MCF 10A (cell line): ENCODE measurements at regions of chr1 and their contacts with region 1.

Region 1: DNA sequence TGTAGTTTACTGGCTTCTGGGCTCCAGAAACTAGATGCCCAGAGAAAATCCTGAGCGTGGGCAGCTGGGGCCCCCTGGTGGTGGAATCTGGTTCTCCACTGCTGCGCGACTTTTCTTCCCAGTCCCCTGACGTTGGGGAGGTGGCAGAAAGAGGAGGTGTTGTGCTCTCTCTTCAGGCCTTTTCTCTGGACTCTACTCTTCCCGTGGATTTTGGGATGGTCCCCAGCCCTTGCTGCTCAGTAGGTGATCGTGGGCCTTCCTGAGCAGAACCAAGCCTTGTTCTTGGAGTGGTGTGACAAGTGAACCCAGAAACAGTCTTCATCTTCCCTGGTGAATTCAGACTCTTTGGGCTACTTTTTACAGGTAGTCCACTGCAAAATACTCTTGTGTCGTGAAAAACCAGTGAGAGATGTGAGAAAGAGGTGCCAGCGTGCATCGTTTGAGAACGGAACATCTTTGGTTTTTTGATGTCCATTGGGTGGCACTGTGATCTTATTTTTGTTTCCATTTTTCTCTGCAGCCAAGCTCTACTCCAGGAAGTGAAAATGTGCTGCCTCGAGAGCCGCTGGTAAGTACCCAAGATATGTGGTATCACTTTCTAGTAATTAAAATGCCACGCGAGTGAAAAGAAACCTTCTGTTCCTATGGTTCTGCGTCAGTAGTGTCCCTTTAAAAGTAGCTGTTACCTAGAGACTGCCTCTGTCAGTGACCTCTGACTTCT is 20.2 kb downstream of the PEX14 start:
- DNase-seq: peak; percentile 76
- H3K4me3 Mint-ChIP-seq: peak overlapping the region; percentile 58
- H3K27ac Mint-ChIP-seq: peak overlapping the region; percentile 80
- H3K4me1 Mint-ChIP-seq: peaks cover 26% of the 10 kb centered on the region
- H3K27me3 Mint-ChIP-seq: no peaks in the 10 kb centered on the region
- CTCF ChIP-seq: peak; percentile 83

Region 2: DNA sequence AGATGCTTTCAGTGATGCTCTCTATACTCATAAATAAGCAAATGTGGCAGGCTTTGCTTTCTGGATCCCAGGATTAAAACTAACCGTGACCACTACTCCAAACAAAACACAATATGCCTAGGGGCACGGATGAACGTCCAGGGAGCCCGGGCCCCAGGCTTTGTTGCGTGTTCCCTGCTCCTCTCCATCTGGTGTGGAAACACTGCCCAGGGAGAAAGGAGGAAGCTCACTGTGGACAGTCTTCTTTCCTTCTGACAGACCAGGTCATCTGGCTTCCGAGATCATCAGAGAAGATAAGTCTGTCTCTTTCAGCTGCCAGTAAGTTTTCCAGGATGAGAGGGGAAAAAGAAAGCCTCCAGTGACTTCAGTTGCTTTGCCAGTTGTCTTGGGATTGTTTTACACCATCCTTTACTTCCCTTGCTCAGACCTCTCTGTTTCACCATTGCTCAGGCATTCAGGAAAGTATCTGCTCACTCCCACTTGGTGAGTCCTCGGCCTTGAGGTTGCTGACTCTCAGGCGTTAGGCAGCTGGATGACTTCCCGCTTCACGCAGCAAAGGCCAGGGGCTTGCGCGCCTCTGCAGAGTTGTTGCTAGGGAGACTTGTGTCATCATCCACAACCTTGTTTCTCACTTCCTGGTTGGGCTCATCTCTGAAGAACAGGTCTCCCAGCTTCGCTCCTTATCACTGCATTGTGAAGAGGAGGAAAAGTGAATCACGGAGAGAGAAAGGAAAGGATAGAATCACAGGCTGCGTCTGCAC is 116.7 kb before region 1 on chr1:
- CTCF ChIA-PET with region 1: interaction called, 6 read pairs
- POLR2A ChIA-PET with region 1: no interaction called
- intact Hi-C with region 1: loop called (anchors 2 kb)
- DNase-seq: no peak
- H3K4me3 Mint-ChIP-seq: no peak overlapping the region
- H3K27ac Mint-ChIP-seq: no peak overlapping the region
- H3K4me1 Mint-ChIP-seq: peaks cover 5% of the 10 kb centered on the region
- H3K27me3 Mint-ChIP-seq: no peaks in the 10 kb centered on the region
- CTCF ChIP-seq: no peak

Region 3: DNA sequence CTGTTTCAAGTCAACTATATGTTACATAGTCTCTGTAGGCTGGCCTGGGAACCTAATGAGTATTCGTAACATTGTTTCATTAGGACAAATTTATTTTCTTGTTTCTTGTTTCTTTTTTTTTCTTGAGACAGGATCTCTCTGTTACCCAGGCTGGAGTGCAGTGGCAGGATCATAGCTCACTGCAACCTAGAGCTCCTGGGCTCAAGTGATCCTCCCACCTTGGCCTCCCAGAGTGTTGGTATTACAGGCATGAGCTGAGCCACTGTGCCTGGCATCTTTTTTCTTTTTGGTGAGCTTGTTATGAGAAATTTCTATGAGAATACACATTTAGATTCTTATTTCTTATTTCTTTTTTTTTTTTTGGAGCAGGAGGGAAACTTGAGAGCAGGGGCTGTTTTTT is 57.9 kb before region 1 on chr1:
- CTCF ChIA-PET with region 1: interaction called, 119 read pairs
- POLR2A ChIA-PET with region 1: interaction called, 73 read pairs
- intact Hi-C with region 1: no loop called
- DNase-seq: no peak
- H3K4me3 Mint-ChIP-seq: no peak overlapping the region
- H3K27ac Mint-ChIP-seq: no peak overlapping the region
- H3K4me1 Mint-ChIP-seq: peaks cover 4% of the 10 kb centered on the region
- H3K27me3 Mint-ChIP-seq: no peaks in the 10 kb centered on the region
- CTCF ChIP-seq: no peak

Region 4: DNA sequence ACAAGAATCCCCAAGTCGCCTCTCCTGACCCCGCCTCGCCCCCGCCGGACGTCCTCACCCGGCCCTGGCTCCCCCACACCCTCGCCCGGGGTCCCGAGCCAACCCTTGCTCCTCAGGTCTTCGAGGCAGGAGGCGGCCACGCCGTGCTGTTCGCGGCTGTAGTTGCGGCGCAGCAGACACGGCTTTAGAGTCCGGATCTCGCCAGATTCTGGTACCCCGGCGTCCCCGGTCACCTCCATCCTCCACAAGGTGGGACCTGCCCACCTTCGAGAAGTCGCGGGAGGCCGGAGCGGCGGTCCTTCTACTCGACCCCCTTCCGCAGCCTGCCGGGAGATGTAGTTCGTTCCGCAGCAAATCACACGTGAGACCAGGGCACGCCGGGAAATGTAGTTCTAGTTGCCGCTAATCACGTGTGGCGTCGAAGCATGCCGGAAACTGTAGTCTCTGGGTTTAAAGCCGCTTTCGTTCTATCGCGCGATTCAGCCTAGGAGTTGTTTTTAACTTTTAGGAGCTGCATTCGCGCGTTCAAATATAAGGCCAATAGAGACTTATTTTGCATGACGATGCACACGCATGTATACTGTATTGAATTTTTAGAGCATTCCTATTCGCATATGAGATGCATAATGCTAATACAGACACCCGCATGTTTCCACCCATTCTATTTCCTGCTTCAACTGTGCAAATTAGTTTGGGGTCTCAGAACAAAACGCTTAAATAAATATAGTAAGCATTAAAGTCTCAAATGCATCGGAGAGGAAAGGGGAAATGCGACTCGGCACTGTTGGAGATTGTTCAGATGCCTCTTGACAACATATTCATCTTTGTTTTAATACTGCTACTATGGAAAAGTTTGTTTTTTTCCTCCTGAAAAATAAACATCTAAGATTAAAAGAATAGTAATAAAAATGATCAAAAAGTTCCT is 22.4 kb before region 1 on chr1 and contains the start of gene DFFA:
- CTCF ChIA-PET with region 1: interaction called, 15 read pairs
- POLR2A ChIA-PET with region 1: interaction called, 10 read pairs
- intact Hi-C with region 1: no loop called
- DNase-seq: peak; percentile 96
- H3K4me3 Mint-ChIP-seq: peak within 1 kb of the TSS; percentile 97
- H3K27ac Mint-ChIP-seq: peak within 1 kb of the TSS; percentile 94
- H3K4me1 Mint-ChIP-seq: peaks cover 7% of the 10 kb centered on the region
- H3K27me3 Mint-ChIP-seq: no peaks in the 10 kb centered on the region
- CTCF ChIP-seq: no peak
- total RNA-seq, gene DFFA: 51.3 and 55.7 TPM in 2 replicates

Region 5: GRCh38 chr1:10507111-10507879 is 12.4 kb after region 1 on chr1:
- CTCF ChIA-PET with region 1: interaction called, 63 read pairs
- POLR2A ChIA-PET with region 1: interaction called, 21 read pairs
- intact Hi-C with region 1: no loop called
- DNase-seq: peak; percentile 86
- H3K4me3 Mint-ChIP-seq: no peak overlapping the region
- H3K27ac Mint-ChIP-seq: no peak overlapping the region
- H3K4me1 Mint-ChIP-seq: peaks cover 17% of the 10 kb centered on the region
- H3K27me3 Mint-ChIP-seq: no peaks in the 10 kb centered on the region
- CTCF ChIP-seq: peak; percentile 83

Region 6: DNA sequence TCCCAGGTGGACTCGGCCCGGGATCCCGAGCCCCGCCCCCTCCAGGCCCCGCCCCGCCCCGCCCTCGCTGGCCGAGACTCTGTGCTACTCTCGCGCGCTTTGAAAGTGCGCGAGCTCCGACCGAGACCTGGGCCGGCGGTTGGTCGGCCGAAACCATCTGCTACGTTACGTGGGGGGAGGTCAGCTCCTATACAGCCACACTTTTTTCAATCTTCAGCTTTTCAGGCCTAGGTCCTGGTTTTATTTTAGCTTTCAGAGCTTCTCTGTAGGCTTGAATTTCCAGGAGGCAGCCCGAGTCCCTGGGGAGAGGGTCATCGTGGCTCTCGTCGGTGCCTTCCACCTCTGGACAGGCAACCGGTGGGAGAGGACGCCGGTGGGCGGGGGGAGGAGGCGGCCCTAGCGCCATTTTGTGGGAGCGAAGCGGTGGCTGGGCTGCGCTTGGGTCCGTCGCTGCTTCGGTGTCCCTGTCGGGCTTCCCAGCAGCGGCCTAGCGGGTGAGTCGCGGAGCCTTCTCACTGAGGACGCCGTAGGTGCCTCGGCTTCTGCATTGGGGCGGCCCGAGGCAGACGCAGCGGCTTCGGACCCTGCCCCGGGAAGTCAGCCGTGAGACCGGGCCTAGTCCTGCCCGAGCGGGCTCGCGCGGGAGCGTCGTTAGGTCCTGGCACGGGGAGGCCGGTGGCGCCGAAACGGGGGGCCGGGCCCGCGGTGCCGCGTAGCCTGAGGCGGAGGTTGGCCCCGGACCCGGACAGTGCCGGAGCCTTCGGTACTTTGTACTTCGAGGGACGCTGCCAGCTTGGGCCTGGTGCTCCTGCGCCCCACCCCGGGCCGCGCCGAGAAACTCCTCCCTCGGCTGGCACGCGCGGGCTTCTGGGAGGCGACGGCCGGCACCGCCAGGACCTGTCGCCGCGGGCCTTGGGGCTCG is 517.6 kb after region 1 on chr1 and contains the start of gene TARDBP:
- CTCF ChIA-PET with region 1: no interaction called
- POLR2A ChIA-PET with region 1: interaction called, 20 read pairs
- intact Hi-C with region 1: no loop called
- DNase-seq: peak; percentile 89
- H3K4me3 Mint-ChIP-seq: peak within 1 kb of the TSS; percentile 83
- H3K27ac Mint-ChIP-seq: peak within 1 kb of the TSS; percentile 100
- H3K4me1 Mint-ChIP-seq: no peaks in the 10 kb centered on the region
- H3K27me3 Mint-ChIP-seq: no peaks in the 10 kb centered on the region
- CTCF ChIP-seq: no peak
- total RNA-seq, gene TARDBP: 144 and 172 TPM in 2 replicates